ENCODE measurements at regions of chr5 and their contacts with region 1.

Region 1: GRCh38 chr5:148730943-148731861 is 76.9 kb upstream of the HTR4 start:
- DNase-seq: peak in 1 of 2 donors; percentile 88
- H3K4me3 ChIP-seq: peak overlapping the region; percentile 36 to 47
- H3K27ac ChIP-seq: no peak overlapping the region
- H3K4me1 ChIP-seq: peaks cover 0 to 11% of the 10 kb centered on the region in 2 donors
- H3K27me3 ChIP-seq: no peaks in the 10 kb centered on the region
- CTCF ChIP-seq: peak; percentile 82 to 93 (median 87)

Region 2: DNA sequence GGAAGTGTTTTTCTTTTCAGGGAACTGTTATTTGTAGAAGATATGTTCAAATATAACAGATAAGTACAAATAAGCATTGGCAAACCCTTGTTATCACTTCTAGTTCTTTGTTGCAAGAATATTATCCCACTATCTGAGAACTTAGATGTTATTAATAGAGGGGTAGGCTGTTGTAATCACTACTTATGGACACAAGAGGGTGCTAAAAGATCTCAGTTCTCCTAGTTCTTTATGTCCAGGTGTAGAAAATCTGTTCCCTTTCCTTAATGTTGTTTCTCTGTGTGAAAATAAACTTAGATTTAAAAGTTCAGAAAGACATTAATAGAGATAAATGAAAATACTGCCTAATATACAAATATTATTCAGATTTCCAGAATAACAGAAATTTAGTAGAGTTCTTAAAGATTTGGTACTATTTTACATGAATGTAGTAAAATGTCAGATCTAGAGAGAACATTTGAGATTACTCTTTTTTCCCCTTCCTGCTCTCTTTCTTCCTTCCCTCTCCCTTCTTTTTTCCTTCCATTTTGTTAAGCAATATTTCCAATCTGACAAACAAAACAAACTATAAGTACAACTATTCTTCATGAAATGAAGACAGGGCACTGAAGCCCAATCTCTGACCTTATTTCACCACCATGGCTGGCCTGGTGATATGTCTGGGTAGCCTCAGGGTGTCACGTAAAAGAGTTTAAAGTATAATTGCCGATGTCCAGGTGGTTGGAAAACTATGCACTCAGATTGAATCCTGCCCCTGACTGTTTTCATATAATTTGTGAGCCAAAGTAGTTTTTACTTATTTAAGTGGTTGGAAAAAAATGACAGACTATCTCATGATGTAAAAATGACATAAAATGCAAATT is 781.3 kb before region 1 on chr5:
- intact Hi-C with region 1: loop called (anchors 10 kb)
- DNase-seq: no peak
- H3K4me3 ChIP-seq: no peak overlapping the region
- H3K27ac ChIP-seq: no peak overlapping the region
- H3K4me1 ChIP-seq: no peaks in the 10 kb centered on the region
- H3K27me3 ChIP-seq: no peaks in the 10 kb centered on the region
- CTCF ChIP-seq: peak; percentile 31 to 61 (median 51)

Region 3: DNA sequence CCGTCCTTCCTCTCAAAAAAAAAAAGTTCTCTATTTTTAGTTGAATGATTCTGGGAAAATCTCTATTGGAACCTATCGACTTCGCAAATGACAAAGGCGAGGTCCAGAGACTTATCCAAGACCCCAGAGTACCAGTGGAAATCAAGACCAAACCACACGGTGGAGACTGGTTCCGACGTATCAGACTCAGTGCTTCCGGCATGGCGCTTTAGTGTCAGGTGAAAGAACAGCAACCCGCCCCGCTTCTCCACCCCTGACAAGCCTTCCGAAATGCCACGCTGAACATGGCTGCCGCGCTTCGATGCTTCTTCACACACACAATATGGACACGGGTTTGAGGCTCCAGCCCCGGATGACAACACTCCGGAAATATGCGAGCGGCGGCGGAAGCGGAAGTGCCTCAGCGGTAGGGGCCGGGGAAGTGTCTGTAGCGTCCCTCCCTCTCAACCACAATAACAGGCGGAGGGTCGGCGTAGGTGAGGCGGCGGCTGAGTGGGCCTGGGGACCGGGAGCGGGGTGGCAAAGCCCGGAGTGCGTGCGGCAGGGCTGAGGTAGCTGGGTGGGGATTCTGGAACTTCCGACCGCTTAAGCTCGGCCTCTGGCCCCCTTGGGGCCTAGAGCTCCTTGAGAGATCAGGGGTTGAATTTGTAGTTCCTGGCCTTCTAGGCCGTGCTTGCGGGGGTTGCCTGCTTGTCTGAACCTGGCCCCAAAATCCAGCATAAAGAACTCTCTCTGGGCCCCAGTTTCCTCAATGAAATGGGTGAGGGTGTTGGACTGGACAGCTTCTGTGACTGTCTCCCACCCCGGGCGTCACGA is 347.4 kb before region 1 on chr5 and contains the start of gene FBXO38:
- intact Hi-C with region 1: loop called (anchors 5 kb)
- DNase-seq: peak; percentile 96 to 99
- H3K4me3 ChIP-seq: peak within 1 kb of the TSS; percentile 84 to 99
- H3K27ac ChIP-seq: peak within 1 kb of the TSS; percentile 85 to 94
- H3K4me1 ChIP-seq: peaks cover 6 to 22% of the 10 kb centered on the region in 2 donors
- H3K27me3 ChIP-seq: no peaks in the 10 kb centered on the region
- CTCF ChIP-seq: peak in 2 of 3 experiments; percentile 5 to 7
- total RNA-seq, gene FBXO38: 12.1 TPM

Region 4: GRCh38 chr5:148768806-148769415 is 37.7 kb after region 1 on chr5:
- intact Hi-C with region 1: no loop called
- DNase-seq: no peak
- H3K4me3 ChIP-seq: no peak overlapping the region
- H3K27ac ChIP-seq: no peak overlapping the region
- H3K4me1 ChIP-seq: no peaks in the 10 kb centered on the region
- H3K27me3 ChIP-seq: no peaks in the 10 kb centered on the region
- CTCF ChIP-seq: no peak

Region 5: DNA sequence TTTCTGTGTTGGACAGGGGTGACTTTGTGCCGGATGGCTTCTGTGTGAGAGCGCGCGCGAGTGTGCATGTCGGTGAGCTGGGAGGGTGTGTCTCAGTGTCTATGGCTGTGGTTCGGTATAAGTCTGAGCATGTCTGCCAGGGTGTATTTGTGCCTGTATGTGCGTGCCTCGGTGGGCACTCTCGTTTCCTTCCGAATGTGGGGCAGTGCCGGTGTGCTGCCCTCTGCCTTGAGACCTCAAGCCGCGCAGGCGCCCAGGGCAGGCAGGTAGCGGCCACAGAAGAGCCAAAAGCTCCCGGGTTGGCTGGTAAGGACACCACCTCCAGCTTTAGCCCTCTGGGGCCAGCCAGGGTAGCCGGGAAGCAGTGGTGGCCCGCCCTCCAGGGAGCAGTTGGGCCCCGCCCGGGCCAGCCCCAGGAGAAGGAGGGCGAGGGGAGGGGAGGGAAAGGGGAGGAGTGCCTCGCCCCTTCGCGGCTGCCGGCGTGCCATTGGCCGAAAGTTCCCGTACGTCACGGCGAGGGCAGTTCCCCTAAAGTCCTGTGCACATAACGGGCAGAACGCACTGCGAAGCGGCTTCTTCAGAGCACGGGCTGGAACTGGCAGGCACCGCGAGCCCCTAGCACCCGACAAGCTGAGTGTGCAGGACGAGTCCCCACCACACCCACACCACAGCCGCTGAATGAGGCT is 95.0 kb after region 1 on chr5 and contains the start of gene ADRB2:
- intact Hi-C with region 1: loop called (anchors 5 kb)
- DNase-seq: peak; percentile 92 to 98
- H3K4me3 ChIP-seq: peak within 1 kb of the TSS; percentile 59 to 71
- H3K27ac ChIP-seq: peak within 1 kb of the TSS; percentile 77 to 85
- H3K4me1 ChIP-seq: peaks cover 0 to 11% of the 10 kb centered on the region in 2 donors
- H3K27me3 ChIP-seq: no peaks in the 10 kb centered on the region
- CTCF ChIP-seq: no peak
- total RNA-seq, gene ADRB2: 11.2 TPM

Region 6: DNA sequence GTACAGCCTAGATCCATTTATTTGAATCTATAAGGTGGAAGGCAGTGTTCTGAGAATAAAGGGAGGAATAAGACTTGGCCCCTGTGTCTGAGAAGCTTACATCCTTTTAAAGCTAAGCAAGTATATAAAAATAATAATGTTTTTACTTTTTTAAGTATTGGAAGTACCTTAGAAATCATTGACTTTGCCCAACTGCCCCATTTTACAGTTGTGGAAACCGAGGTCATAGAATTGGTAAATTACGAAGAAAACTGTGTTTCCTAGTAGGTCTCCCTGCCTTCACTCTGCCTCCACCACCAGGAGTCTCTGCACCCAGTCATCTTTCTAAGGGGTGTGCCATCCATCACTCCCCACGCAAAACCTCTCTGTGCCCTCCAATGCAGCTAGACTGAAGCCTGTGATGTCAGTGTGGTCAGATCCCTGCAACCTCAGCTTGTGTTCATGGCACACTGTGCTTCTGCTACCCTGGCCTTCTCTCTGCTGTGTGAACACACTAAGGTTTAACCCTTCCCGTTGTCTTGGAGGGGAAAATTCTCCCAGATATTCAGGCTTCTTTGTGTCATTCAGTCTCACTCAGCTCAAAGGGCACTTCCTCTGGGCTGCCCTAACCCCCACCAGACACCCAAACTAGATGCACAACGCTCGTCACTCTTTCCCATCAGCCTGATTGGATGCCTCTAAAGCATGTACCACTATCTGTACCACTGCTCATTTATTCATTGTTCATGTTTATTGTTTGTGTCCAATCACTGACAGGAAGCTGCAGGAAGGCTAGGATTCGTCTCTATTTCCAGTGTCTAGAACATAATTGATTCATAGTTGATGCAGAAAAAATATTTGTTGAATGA is 113.5 kb after region 1 on chr5:
- intact Hi-C with region 1: no loop called
- DNase-seq: no peak
- H3K4me3 ChIP-seq: no peak overlapping the region
- H3K27ac ChIP-seq: no peak overlapping the region
- H3K4me1 ChIP-seq: no peaks in the 10 kb centered on the region
- H3K27me3 ChIP-seq: no peaks in the 10 kb centered on the region
- CTCF ChIP-seq: no peak

Region 7: DNA sequence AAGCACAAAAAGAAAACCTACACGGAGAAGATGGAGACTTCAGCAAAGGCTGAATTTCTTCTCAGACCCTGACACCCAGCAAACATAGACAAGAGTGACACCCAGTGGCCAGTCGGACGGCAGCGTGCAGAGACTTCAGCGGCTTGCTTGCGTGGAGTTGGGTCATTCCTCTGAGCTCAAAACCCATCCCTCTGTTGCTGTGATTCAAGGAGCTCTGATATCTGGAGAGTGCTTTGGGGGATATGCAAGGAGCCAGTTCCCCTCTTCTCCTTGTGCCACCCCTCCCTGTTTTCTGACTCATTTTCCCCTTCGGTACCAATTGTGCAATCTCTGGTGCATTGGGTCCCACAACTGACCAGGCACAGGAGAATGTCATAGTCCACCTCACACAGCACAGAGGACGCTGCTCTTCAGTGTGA is 304.2 kb after region 1 on chr5:
- intact Hi-C with region 1: loop called (anchors 1 kb)
- DNase-seq: peak in 1 of 2 donors; percentile 85
- H3K4me3 ChIP-seq: no peak overlapping the region
- H3K27ac ChIP-seq: no peak overlapping the region
- H3K4me1 ChIP-seq: no peaks in the 10 kb centered on the region
- H3K27me3 ChIP-seq: no peaks in the 10 kb centered on the region
- CTCF ChIP-seq: peak; percentile 67 to 83 (median 80)

Region 8: DNA sequence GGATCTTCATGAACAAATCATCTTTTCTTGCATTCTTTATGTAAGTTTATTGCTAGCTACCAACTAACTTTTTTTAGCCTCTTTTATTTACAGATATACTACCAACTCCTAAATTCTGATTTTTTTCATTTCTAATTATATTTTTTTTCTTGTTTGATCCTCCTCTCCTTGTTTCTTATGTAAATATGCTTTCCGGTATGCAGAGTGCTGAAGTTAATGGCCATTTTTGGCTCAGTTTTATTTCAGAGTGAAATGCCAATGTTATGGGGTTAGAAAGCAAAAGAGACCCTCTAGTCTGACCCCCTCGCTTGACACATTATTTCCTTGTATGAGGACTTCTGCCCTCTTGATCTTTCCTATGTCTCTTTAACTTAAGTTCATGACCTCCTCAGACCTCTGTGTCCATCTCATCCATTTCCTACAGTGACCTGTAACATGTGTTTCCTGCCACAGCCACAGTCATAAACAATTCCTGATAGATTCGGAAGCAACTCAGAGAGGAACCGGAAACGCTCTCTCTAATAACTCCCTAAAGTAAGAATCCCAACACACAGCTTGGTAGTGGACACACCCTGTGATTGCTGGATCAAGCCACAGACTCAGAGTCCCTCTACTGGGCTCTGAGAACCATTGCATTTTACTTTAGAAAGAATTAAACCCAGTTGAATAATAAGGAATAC is 497.6 kb after region 1 on chr5:
- intact Hi-C with region 1: loop called (anchors 5 kb)
- DNase-seq: peak in 1 of 2 donors; percentile 74
- H3K4me3 ChIP-seq: no peak overlapping the region
- H3K27ac ChIP-seq: peak overlapping the region in 1 of 2 donors; percentile 17
- H3K4me1 ChIP-seq: peaks cover 8 to 14% of the 10 kb centered on the region in 2 donors
- H3K27me3 ChIP-seq: no peaks in the 10 kb centered on the region
- CTCF ChIP-seq: peak; percentile 55 to 82 (median 72)

Region 9: GRCh38 chr5:149320791-149321330 is 589.7 kb after region 1 on chr5:
- intact Hi-C with region 1: no loop called
- DNase-seq: peak in 1 of 2 donors; percentile 76
- H3K4me3 ChIP-seq: no peak overlapping the region
- H3K27ac ChIP-seq: peak overlapping the region in 1 of 2 donors; percentile 39
- H3K4me1 ChIP-seq: peaks cover 0 to 6% of the 10 kb centered on the region in 2 donors
- H3K27me3 ChIP-seq: no peaks in the 10 kb centered on the region
- CTCF ChIP-seq: no peak